ENCODE measurements at regions of chr2 and their contacts with region 1.

Region 1: DNA sequence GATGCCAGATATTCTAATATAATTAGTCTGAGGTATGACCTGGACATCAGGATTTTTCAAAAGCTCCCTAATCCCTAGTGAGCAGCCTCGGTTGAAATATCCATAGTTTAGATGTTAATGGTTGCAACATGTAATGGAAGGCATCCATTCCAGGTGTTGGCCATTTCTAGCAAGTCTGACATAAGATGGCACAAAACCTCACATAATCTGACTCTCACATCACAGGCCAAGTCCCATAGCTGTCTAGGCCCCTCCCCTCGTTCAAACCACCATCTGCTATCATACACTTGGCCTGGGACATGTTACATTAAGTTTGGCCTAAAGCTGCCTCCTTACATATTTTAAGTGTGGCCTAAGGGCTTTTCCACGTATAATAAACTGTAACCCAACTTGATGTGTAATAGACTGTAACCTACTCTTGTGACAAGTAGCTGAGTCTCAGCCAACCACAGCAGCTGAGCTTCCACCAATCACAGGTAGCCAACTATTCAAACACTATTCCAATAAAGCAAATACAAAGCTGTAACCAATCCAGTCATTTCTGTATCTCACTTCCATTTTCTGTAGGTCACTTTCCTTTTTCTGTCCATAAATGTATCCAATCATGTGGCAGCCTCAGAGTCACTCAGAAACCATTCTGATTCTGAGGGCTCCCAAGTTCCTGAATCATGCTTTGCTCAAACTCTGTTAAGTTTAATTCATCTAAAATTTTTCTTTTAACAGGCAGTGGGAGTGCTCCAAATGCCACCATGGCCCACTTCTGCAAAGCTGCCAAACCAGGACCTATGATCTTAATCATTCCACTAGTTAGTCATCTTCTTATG is 59.4 kb downstream of the ADD2 start:
- DNase-seq: no peak
- ATAC-seq: peak; percentile 26; the same call in 2 of the 3 replicates
- H3K4me3 ChIP-seq: no peak overlapping the region
- H3K27ac ChIP-seq: no peak overlapping the region
- H3K4me1 ChIP-seq: peaks cover 27 to 30% of the 10 kb centered on the region in 2 experiments; a peak in 4 of 5 replicates
- H3K27me3 ChIP-seq: no peaks in the 10 kb centered on the region
- CTCF ChIP-seq: no peak
- EP300 ChIP-seq: no peak
- POLR2A ChIP-seq: no peak
- RAD21 ChIP-seq: no peak

Region 2: DNA sequence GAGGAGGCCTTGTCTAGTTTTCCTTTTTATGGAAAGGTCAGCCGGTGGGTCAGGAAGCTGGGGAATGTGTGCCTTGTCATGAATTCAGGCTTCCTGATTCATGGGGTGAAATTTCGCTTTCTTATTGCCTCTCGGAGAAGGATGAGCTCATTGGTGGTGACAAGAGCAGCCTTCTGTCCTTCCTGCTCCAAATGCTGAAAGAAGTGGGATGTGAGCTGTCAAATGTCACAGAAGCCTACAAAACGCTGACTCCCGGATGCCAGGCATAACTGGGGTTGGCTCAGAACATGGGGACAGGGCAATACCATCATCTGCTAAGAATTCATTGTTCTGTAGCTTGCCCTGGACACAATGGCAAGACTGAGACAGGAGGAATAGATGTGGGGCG is 350.9 kb before region 1 on chr2:
- CTCF ChIA-PET with region 1: no interaction called
- POLR2A ChIA-PET with region 1: no interaction called
- in situ Hi-C with region 1: no loop called
- intact Hi-C with region 1: no loop called
- DNase-seq: no peak
- ATAC-seq: no peak
- H3K4me3 ChIP-seq: no peak overlapping the region
- H3K27ac ChIP-seq: no peak overlapping the region
- H3K4me1 ChIP-seq: no peaks in the 10 kb centered on the region
- H3K27me3 ChIP-seq: peaks cover 3% of the 10 kb centered on the region in 2 experiments; a peak in 3 of 5 replicates
- CTCF ChIP-seq: no peak
- EP300 ChIP-seq: no peak
- POLR2A ChIP-seq: no peak
- RAD21 ChIP-seq: no peak

Region 3: GRCh38 chr2:70767699-70768589 is 59.4 kb after region 1 on chr2 and contains the start of gene ADD2:
- CTCF ChIA-PET with region 1: interaction called, 3 read pairs
- POLR2A ChIA-PET with region 1: interaction called, 4 read pairs
- in situ Hi-C with region 1: no loop called
- intact Hi-C with region 1: loop called (anchors 5 kb)
- DNase-seq: peak; percentile 78 to 87 (median 85)
- ATAC-seq: peak; percentile 95
- H3K4me3 ChIP-seq: peak within 1 kb of the TSS; percentile 73
- H3K27ac ChIP-seq: peak within 1 kb of the TSS; percentile 65
- H3K4me1 ChIP-seq: peaks cover 2 to 12% of the 10 kb centered on the region in 2 experiments; a peak in 4 of 5 replicates
- H3K27me3 ChIP-seq: no peaks in the 10 kb centered on the region; a peak in 1 of 5 replicates
- CTCF ChIP-seq: peak; percentile 55 to 96 (median 84)
- EP300 ChIP-seq: no peak
- POLR2A ChIP-seq: peak; percentile 61; the same call in 1 of the 2 replicates
- RAD21 ChIP-seq: peak; percentile 21 to 64; a peak in 3 of 4 replicates
- polyA plus RNA-seq, gene ADD2: 3.5 to 4.0 TPM

Measured in K562 (cell line).